ENCODE measurements at regions of chr4 and their contacts with region 1.

Region 1: GRCh38 chr4:107631560-107631959 is 88.5 kb downstream of the PAPSS1 start:
- DNase-seq: no peak
- H3K4me3 ChIP-seq: no peak overlapping the region
- H3K4me3 Mint-ChIP-seq: no peak overlapping the region
- H3K27ac ChIP-seq: no peak overlapping the region
- H3K27ac Mint-ChIP-seq: no peak overlapping the region
- H3K4me1 ChIP-seq: no peaks in the 10 kb centered on the region
- H3K4me1 Mint-ChIP-seq: no peaks in the 10 kb centered on the region
- H3K27me3 ChIP-seq: no peaks in the 10 kb centered on the region
- H3K27me3 Mint-ChIP-seq: no peaks in the 10 kb centered on the region

Region 2: DNA sequence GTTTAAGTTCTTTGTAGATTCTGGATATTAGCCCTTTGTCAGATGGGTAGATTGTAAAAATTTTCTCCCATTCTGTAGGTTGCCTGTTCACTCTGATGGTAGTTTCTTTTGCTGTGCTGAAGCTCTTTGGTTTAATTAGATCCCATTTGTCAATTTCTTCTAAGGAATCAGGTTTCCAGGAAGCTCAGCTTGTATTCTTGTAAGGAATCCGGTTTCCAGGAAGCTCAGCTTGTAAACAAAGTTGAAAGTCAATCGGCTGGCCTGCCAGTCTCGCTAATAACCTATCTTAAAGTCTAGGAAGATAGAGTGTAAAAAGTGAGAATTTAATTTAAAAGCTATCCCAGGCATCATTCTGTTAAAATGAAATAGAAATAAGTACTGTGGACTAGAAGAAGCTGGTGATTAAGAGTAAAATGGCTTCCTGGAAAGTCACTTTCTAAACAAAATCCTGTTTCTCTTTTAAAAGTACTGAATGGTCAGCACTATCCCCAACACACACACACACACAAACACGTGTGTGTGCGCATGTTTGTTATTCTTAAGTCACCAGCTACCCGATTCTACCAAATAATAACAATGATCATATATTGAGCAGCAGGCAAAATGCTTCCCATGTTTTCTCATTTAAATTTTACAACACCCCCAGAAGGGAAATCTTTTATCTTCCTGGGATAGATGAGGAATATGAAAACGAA is 83.2 kb before region 1 on chr4:
- CTCF ChIA-PET with region 1: no interaction called
- POLR2A ChIA-PET with region 1: no interaction called
- intact Hi-C with region 1: no loop called
- DNase-seq: no peak
- H3K4me3 ChIP-seq: no peak overlapping the region
- H3K4me3 Mint-ChIP-seq: no peak overlapping the region
- H3K27ac ChIP-seq: no peak overlapping the region
- H3K27ac Mint-ChIP-seq: no peak overlapping the region
- H3K4me1 ChIP-seq: no peaks in the 10 kb centered on the region
- H3K4me1 Mint-ChIP-seq: no peaks in the 10 kb centered on the region
- H3K27me3 ChIP-seq: no peaks in the 10 kb centered on the region
- H3K27me3 Mint-ChIP-seq: peaks cover 1 to 2% of the 10 kb centered on the region in 2 donors

Region 3: DNA sequence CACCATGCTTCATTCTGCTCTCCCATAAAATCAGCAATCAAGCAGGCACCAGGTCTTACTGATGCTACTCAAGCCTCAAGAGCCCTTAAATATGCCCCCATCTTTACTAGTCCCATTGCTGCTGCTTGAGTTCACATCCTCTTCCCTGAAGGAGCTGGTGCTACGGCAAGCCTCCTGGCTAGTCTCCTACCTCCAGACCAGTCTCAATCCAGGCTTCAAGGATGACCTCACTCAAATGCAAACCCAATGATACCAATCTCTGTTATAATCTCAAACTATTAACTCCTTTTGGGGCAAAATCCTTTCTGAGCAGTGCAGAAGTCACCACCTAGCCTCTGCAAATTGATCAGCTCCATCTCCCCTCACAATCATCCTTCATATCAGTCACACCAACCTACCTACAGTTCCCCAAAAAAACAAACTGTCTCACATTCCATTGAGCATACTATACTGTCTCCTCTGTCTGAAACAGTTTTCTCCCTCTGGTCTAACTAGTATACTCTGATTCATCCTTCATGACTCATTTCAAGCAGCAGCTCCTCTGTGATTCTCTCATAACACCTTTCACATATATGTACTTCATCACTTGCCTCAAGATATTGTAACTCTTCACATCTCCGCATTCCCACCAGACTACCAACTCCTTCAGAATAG is 58.5 kb after region 1 on chr4:
- CTCF ChIA-PET with region 1: no interaction called
- POLR2A ChIA-PET with region 1: no interaction called
- intact Hi-C with region 1: loop called (anchors 10 kb)
- DNase-seq: no peak
- H3K4me3 ChIP-seq: no peak overlapping the region
- H3K4me3 Mint-ChIP-seq: no peak overlapping the region
- H3K27ac ChIP-seq: no peak overlapping the region
- H3K27ac Mint-ChIP-seq: no peak overlapping the region
- H3K4me1 ChIP-seq: peaks cover 23% of the 10 kb centered on the region
- H3K4me1 Mint-ChIP-seq: peaks cover 19 to 26% (median 24%) of the 10 kb centered on the region in 4 donors
- H3K27me3 ChIP-seq: no peaks in the 10 kb centered on the region
- H3K27me3 Mint-ChIP-seq: no peaks in the 10 kb centered on the region

Measured in CD4-positive, alpha-beta memory T cell (primary cell).